ENCODE measurements at regions of chr3 and their contacts with region 1.

Region 1: GRCh38 chr3:197002701-197003454 is 26.7 kb downstream of the MELTF start:
- DNase-seq: no peak
- H3K4me3 ChIP-seq: peak overlapping the region; percentile 59 to 66
- H3K27ac ChIP-seq: peak overlapping the region; percentile 96
- H3K4me1 ChIP-seq: peaks cover 20% of the 10 kb centered on the region
- H3K27me3 ChIP-seq: no peaks in the 10 kb centered on the region
- CTCF ChIP-seq: peak; percentile 64 to 72 (median 66)
- POLR2A ChIP-seq: no peak

Region 2: DNA sequence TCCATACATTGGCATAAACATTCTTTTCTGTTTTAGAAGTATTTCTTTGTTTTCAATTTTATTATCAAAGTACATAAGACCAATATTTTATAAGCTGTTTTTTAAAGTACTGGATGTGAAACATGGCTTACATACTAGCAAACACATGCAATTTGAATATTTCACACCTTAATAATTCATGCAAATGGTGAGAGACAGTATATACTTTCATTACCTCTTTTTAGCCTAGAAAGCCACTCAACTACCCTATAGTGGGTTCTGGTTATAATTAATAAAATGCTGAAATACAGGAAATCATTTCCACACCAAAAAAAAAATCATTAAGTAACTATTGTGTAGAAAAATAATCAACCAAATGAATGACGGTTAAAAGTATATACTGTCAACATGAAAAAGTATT is 65.2 kb after region 1 on chr3:
- intact Hi-C with region 1: no loop called
- DNase-seq: no peak
- H3K4me3 ChIP-seq: no peak overlapping the region
- H3K27ac ChIP-seq: no peak overlapping the region
- H3K4me1 ChIP-seq: no peaks in the 10 kb centered on the region
- H3K27me3 ChIP-seq: no peaks in the 10 kb centered on the region
- CTCF ChIP-seq: no peak
- POLR2A ChIP-seq: no peak

Region 3: DNA sequence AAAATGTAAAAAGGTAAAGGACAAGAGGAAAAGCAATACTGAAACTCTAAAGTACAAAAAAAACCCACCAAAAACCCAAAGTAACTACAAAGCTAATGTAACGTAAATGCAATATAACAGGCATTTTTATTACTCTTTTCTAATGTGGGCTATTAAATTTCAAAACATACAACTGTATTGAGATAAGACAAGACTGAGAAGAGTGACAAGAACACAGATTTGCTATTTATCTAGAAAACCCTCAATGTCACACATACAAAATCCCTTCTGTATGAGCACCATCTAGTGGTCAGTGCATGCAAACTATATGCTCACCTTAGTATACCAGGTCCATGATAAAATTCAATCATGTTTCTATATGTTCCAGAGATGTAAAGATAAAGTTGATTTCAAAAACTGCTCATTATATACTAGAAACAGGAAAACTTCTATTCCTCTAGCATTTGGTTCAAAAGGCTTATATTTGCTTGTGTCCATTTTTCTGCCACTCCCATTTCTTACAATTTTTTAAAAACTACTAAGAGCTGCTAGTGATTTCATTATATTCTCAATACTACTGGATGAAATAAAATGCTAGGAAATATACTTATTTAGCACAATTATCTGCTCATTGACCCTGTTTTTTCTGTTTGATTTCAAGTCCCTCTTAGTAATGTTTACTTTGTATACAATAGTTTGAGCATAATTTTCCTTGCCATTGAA is 184.2 kb after region 1 on chr3:
- intact Hi-C with region 1: loop called (anchors 10 kb)
- DNase-seq: no peak
- H3K4me3 ChIP-seq: no peak overlapping the region
- H3K27ac ChIP-seq: no peak overlapping the region
- H3K4me1 ChIP-seq: no peaks in the 10 kb centered on the region
- H3K27me3 ChIP-seq: no peaks in the 10 kb centered on the region
- CTCF ChIP-seq: peak in 2 of 3 experiments; percentile 53 to 74
- POLR2A ChIP-seq: no peak